ENCODE measurements at regions of chr6 and their contacts with region 1.

Region 1: DNA sequence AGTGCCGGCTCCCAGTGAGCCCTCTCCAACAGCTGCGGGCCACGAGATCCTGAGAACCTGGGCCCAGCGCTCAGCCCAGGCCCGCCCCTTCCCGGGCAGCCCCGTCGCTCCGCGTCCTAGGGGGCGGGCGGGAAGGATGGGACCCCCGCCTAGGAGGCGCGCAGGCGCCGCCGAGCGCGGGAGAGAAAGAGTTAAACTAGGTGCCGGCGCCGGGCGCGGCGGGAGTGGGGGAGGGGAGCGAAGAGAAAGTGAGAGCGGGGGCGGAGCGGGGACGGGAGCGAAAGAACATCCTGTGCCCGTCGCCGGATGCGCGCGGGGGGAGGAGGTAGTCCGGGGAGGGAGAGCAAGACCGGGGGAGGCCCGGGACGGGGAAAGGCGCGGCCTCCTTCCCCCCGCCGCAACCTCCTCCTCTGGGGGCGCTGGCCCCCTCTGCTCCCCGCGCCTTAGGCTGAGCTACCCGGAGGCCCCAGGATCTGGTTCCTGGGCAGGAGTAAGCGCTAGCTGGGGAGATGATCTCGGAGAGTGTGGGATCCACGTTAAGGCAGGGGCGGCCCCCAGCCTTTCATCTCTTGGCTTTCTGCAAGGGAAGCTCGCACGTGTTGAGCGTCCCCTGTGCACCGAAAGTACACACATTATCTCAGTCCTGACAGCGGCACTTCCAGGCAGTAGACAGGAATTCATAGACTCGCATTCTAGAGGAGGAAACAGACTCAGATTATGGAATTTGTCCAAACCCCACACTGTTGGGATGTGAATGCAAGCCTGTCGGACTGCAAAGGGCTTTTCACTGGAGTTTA is 4.9 kb upstream of the ARMC12 start:
- DNase-seq: peak; percentile 88 to 97 (median 92)
- H3K4me3 ChIP-seq: peak overlapping the region; percentile 80
- H3K4me3 Mint-ChIP-seq: peak overlapping the region; percentile 84 to 94 (median 88)
- H3K27ac ChIP-seq: peak overlapping the region; percentile 87
- H3K27ac Mint-ChIP-seq: peak overlapping the region; percentile 88 to 98 (median 96)
- H3K4me1 ChIP-seq: peaks cover 82% of the 10 kb centered on the region
- H3K4me1 Mint-ChIP-seq: peaks cover 66 to 91% (median 74%) of the 10 kb centered on the region in 3 donors
- H3K27me3 ChIP-seq: no peaks in the 10 kb centered on the region
- H3K27me3 Mint-ChIP-seq: peaks cover 0 to 4% of the 10 kb centered on the region in 2 donors

Region 2: DNA sequence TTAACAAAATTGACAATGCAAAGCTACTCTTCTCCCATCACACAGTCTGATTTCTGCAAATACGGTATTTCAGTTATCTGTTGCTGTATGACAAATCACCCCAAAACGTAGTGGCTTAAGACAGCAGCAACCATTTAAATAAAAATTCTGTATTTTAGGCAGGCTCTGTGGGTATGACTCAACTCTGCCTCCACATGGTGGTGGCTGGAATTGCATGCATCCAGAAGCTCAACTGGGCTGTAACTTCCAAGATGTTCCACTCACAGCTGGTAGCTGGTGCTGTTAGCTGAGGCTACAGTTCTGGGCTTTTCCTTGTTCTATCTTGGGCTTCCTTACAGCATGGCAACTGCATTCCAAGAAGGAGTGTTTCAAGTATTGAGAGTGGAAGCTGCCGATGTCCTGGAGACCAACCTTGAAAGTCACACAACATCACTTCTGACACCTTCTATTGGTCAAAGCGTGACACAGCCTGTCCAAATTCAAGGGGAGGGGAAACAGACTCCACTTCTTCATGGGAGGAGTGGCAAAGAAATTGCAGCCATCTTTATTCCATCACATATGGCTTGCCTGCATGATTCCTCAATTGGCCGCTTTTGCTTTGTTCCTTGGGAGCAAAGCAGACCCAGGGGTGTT is 179.5 kb before region 1 on chr6:
- CTCF ChIA-PET with region 1: interaction called, 13 read pairs
- POLR2A ChIA-PET with region 1: no interaction called
- DNase-seq: peak; percentile 43 to 68 (median 60)
- H3K4me3 ChIP-seq: no peak overlapping the region
- H3K4me3 Mint-ChIP-seq: peak overlapping the region in 1 of 7 donors; percentile 35
- H3K27ac ChIP-seq: no peak overlapping the region
- H3K27ac Mint-ChIP-seq: no peak overlapping the region
- H3K4me1 ChIP-seq: no peaks in the 10 kb centered on the region
- H3K4me1 Mint-ChIP-seq: peaks cover 6 to 8% (median 7%) of the 10 kb centered on the region in 3 donors
- H3K27me3 ChIP-seq: no peaks in the 10 kb centered on the region
- H3K27me3 Mint-ChIP-seq: peaks cover 14 to 24% of the 10 kb centered on the region in 2 donors

Region 3: DNA sequence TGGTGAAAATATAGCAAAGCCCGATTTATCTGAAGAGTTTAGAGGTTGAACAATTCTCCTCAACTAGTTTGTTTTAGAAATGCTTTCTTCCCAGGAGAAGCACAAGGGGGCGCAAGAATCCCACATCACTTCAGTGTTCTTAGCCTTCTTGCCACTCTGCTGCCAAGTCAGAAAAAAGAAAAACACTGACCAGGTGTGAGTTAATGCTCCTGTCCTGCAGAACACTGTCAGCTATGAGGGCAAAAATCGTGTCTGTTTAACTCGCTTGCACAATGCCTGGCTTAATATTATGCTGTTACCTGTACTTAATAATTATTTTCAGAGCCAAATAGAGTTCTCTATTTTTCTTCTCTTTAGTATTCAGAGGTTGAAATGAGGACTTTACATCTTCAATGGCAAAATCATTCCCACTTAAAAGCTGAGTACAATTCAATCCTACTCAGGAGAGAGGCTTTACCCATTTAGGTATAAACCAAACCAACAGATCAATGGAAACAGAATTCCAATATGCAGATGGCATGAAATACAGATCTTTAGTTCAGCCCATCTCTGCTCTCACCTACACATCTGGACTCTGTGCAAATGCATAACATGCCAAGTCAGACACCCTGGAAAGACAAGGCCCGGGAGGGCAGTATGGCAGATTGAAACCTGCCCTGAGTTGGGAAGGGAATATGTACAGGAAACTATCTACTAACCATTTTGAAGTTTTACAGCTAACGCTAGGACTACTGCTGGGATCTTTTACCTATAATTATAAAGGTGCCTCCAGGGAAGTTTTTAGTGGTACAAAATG is 147.8 kb before region 1 on chr6:
- CTCF ChIA-PET with region 1: interaction called, 59 read pairs
- POLR2A ChIA-PET with region 1: interaction called, 5 read pairs
- DNase-seq: peak; percentile 55 to 79 (median 64)
- H3K4me3 ChIP-seq: no peak overlapping the region
- H3K4me3 Mint-ChIP-seq: peak overlapping the region in 1 of 7 donors; percentile 7
- H3K27ac ChIP-seq: no peak overlapping the region
- H3K27ac Mint-ChIP-seq: peak overlapping the region; percentile 43 to 77 (median 68)
- H3K4me1 ChIP-seq: peaks cover 65% of the 10 kb centered on the region
- H3K4me1 Mint-ChIP-seq: peaks cover 36 to 58% (median 43%) of the 10 kb centered on the region in 3 donors
- H3K27me3 ChIP-seq: no peaks in the 10 kb centered on the region
- H3K27me3 Mint-ChIP-seq: no peaks in the 10 kb centered on the region

Region 4: DNA sequence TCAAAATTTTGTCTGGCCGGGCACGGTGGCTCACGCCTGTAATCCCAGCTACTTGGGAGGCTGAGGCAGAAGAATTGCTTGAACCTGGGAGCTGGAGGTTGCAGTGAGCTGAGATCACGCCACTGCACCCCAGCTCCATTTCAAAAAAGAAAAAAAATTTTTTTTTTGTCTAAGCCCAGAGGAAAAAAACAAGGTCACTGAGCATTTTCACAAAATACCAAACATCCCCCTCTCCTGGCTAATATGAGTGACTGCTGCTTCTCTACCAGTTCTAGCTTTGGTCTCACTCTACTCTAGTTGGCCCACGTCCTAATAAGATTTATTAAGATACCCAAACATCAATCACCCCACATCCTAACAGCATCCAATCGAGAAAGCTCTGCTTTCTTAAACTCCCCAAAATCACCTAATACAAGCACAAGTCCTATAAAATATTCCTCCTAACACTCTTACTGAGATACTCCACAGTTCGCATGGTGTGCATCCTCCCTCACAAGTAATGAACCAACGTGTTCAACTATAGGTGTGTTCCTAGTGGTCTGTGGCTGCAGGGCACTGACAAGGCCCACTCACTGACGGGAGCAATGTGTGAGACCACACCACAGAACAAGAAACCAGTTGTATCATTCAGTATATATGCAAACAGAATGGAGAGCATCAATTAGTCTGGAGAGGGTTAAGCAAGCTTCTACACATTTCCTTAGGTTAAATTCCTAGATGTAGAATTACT is 107.4 kb before region 1 on chr6:
- CTCF ChIA-PET with region 1: interaction called, 113 read pairs
- POLR2A ChIA-PET with region 1: interaction called, 6 read pairs
- DNase-seq: peak in 2 of 5 donors; percentile 46 to 70
- H3K4me3 ChIP-seq: no peak overlapping the region
- H3K4me3 Mint-ChIP-seq: peak overlapping the region in 3 of 7 donors; percentile 4 to 42 (median 12)
- H3K27ac ChIP-seq: no peak overlapping the region
- H3K27ac Mint-ChIP-seq: peak overlapping the region in 7 of 8 donors; percentile 6 to 89 (median 80)
- H3K4me1 ChIP-seq: peaks cover 37% of the 10 kb centered on the region
- H3K4me1 Mint-ChIP-seq: peaks cover 26 to 46% (median 26%) of the 10 kb centered on the region in 3 donors
- H3K27me3 ChIP-seq: no peaks in the 10 kb centered on the region
- H3K27me3 Mint-ChIP-seq: no peaks in the 10 kb centered on the region

Region 5: DNA sequence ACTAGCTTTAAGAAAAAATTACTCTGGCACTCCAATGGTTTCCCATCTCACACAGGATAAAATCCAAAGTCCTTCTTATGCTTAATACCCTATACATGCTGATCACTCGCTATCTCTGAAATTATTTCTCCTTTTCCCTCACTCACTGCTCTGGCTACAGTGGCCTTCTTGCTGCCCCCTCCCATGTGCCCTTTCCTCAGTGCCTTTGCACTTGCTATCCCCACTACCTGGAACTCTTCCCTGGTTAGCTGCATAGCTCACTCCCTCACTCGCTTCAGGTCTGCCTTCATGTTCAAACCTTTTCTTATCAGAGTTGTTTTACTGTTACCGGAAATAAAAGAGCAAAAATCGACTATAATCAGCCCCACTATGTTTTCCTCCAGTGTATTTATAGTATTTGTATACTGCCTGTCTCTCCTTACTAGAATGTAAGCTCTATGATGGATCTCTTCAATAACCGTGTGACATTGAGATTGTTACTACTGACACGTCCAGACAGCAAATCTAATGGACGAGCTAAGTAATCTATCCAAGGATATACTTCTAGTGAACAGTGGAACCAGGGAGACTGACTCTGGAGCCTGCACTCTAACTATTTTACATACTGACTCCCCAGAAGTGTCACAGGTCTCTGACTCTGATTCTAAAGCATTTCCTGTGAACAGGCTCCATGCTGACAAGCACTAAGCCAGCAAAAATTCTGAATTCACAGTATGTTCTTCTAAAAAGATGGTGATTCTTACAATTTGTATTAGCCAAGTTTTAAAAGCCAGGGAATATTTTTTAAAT is 68.3 kb before region 1 on chr6:
- CTCF ChIA-PET with region 1: interaction called, 14 read pairs
- POLR2A ChIA-PET with region 1: interaction called, 5 read pairs
- DNase-seq: no peak
- H3K4me3 ChIP-seq: peak overlapping the region; percentile 34
- H3K4me3 Mint-ChIP-seq: no peak overlapping the region
- H3K27ac ChIP-seq: no peak overlapping the region
- H3K27ac Mint-ChIP-seq: no peak overlapping the region
- H3K4me1 ChIP-seq: peaks cover 57% of the 10 kb centered on the region
- H3K4me1 Mint-ChIP-seq: peaks cover 16 to 36% (median 20%) of the 10 kb centered on the region in 3 donors
- H3K27me3 ChIP-seq: no peaks in the 10 kb centered on the region
- H3K27me3 Mint-ChIP-seq: no peaks in the 10 kb centered on the region

Measured in CD8-positive, alpha-beta memory T cell (primary cell).